ENCODE measurements at regions of chr9 and their contacts with region 1.

Region 1: GRCh38 chr9:81848472-81848871 is 79.8 kb upstream of the SPATA31D4 start:
- DNase-seq: peak; percentile 96
- H3K4me3 ChIP-seq: no peak overlapping the region
- H3K27ac ChIP-seq: peak overlapping the region; percentile 69
- H3K4me1 ChIP-seq: peaks cover 46% of the 10 kb centered on the region
- H3K27me3 ChIP-seq: no peaks in the 10 kb centered on the region
- CTCF ChIP-seq: peak; percentile 14 to 29
- POLR2A ChIP-seq: no peak

Region 2: GRCh38 chr9:81028504-81028903 is 820.0 kb before region 1 on chr9:
- CTCF ChIA-PET with region 1: no interaction called
- POLR2A ChIA-PET with region 1: no interaction called
- dilution Hi-C with region 1: no loop called
- intact Hi-C with region 1: loop called (anchors 5 kb)
- DNase-seq: peak; percentile 61
- H3K4me3 ChIP-seq: no peak overlapping the region
- H3K27ac ChIP-seq: peak overlapping the region; percentile 42
- H3K4me1 ChIP-seq: peaks cover 6% of the 10 kb centered on the region
- H3K27me3 ChIP-seq: no peaks in the 10 kb centered on the region
- CTCF ChIP-seq: no peak
- POLR2A ChIP-seq: no peak

Region 3: DNA sequence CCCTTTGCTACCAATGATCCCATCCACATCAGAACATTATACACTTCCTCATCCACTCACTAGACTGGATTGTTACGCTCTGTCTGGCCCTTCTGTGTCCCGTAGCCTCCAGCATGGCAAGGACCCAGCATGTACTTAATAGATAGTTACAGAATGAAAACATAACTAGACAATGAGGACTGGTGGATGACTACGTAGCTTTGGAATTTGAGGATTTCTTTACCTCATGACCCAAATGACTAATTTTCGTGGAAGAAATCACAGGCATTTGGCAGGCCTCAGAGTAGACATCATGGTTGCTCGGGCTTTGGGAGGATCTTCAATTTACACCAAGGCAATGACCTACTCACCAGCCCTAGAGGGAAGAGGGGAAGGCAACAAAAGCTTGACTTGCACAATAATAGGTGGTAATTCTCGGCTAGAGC is 458.9 kb before region 1 on chr9:
- CTCF ChIA-PET with region 1: interaction called, 4 read pairs
- POLR2A ChIA-PET with region 1: no interaction called
- dilution Hi-C with region 1: no loop called
- intact Hi-C with region 1: loop called (anchors 1 kb)
- DNase-seq: peak; percentile 98
- H3K4me3 ChIP-seq: no peak overlapping the region
- H3K27ac ChIP-seq: peak overlapping the region; percentile 100
- H3K4me1 ChIP-seq: peaks cover 31% of the 10 kb centered on the region
- H3K27me3 ChIP-seq: no peaks in the 10 kb centered on the region
- CTCF ChIP-seq: no peak
- POLR2A ChIP-seq: peak; percentile 60

Region 4: DNA sequence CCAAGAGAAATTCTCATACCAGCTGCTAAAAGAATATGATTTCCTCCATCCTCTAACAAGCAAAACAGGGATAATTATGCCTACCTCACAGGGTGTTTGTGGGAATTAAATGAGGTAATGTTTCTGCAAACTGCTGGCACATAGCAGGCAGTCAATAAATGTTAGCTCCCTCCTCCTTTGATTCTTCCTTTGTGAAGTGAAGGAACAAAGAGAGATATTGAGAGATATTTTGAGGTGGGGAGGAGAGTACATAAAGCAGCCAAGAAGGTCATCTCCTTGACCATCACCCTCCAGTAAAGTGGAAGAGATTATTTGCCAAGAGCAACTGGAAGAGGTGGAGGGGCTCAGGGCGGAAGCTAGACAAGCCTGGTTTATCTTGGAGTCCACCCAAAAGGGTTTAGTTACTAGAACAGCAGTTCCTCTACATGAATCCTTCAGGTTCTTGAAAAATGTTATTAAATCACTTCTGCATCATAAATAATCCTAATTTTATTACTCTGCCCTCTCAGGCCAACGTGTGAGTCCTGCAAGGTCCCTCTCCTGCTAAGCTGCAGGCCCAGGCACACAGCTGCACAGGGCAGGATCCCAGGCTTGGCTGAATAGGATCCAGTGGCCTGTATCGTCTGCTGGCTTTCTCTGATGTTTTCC is 124.1 kb before region 1 on chr9:
- CTCF ChIA-PET with region 1: interaction called, 10 read pairs
- POLR2A ChIA-PET with region 1: no interaction called
- dilution Hi-C with region 1: no loop called
- intact Hi-C with region 1: no loop called
- DNase-seq: peak; percentile 89
- H3K4me3 ChIP-seq: no peak overlapping the region
- H3K27ac ChIP-seq: peak overlapping the region; percentile 21
- H3K4me1 ChIP-seq: peaks cover 8% of the 10 kb centered on the region
- H3K27me3 ChIP-seq: no peaks in the 10 kb centered on the region
- CTCF ChIP-seq: no peak
- POLR2A ChIP-seq: no peak

Region 5: DNA sequence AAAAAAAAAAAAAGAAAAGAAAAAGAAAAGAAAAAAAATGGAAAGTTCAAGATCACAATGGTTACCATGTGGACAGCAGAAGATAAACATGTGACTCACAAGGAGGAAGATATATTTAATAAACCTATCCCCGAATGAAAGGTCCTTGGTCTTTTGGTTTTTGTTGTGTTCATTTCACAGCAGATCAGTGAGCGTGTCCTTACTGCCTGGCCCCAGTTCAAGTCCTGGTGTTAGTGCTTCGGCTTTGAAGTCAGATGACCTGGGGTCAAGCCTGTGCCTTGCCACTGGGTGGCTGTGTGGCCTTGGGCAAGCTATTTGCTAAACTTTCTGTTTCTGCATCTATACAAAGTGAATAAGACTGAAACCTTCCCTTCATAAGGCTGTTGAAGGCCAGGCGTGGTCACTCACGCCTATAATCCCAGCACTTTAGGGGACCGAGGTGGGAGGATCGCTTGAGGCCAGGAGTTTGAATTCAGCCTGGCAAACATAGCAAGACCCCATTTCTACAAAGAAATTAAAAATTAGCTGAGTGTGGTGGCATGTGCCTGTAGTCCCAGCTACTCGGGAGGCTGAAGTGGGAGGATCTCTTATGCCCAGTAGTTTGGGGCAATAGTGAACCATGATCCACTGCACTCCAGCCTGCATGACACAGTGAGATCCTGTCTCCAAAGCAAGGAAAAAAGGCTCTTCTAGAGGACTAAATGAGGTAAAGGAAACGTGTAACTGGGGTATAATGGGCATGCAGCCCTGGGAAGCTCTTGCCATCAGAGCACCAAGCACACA is 14.7 kb before region 1 on chr9:
- CTCF ChIA-PET with region 1: interaction called, 11 read pairs
- POLR2A ChIA-PET with region 1: no interaction called
- dilution Hi-C with region 1: no loop called
- intact Hi-C with region 1: no loop called
- DNase-seq: peak; percentile 62
- H3K4me3 ChIP-seq: no peak overlapping the region
- H3K27ac ChIP-seq: peak overlapping the region; percentile 24
- H3K4me1 ChIP-seq: peaks cover 2% of the 10 kb centered on the region
- H3K27me3 ChIP-seq: peaks cover 2 to 5% of the 10 kb centered on the region in 2 experiments
- CTCF ChIP-seq: no peak
- POLR2A ChIP-seq: no peak

Region 6: DNA sequence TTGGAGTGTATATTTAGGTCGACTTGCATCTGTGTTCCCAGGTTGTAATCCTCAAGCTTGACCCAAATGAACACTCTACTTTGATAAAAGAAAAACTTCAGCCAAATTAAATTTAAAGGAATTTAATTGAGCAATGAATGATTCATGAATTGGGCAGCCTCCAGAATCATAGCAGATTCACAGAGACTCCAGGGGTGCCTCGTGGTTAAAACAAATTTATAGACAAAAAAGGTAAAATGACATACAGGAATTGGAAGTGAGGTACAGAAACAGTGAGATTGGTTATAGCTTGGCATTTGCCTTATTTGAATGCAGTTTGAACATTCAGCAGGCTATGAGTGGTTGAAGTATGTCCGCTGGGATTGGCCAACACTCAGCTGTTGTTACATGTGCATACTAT is 58.2 kb after region 1 on chr9:
- CTCF ChIA-PET with region 1: no interaction called
- POLR2A ChIA-PET with region 1: no interaction called
- dilution Hi-C with region 1: no loop called
- intact Hi-C with region 1: no loop called
- DNase-seq: no peak
- H3K4me3 ChIP-seq: no peak overlapping the region
- H3K27ac ChIP-seq: no peak overlapping the region
- H3K4me1 ChIP-seq: no peaks in the 10 kb centered on the region
- H3K27me3 ChIP-seq: no peaks in the 10 kb centered on the region
- CTCF ChIP-seq: no peak
- POLR2A ChIP-seq: no peak

Region 7: DNA sequence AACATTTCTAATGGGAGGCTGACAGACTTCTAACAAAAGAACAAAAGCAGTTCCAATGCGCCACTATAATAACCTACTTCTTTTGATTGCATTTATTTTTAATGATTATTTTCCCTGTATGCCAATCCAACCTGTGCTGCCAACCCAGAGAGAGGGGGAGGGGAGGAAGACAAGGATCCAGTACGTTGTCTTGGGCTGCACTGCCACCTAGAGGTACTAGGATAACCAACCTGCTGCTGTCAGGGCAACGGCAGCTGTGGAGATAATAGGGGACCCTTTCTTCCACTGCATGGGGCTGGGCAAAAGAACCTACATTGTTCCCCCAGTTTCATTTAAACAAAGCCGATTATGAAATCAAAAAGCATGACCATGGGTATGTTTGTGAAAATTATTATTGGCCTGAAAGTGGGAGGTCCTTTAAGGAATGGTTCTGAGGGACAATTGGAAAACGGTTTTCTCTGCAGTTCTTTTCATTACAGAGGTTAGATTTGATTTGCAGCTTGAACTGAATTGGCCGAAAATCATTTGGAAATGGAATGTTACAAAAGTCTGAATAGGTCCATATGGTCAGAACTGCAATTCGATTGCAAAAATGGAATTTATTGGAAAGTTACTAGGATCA is 1113.1 kb after region 1 on chr9:
- CTCF ChIA-PET with region 1: no interaction called
- POLR2A ChIA-PET with region 1: no interaction called
- dilution Hi-C with region 1: no loop called
- intact Hi-C with region 1: loop called (anchors 10 kb)
- DNase-seq: peak; percentile 74
- H3K4me3 ChIP-seq: no peak overlapping the region
- H3K27ac ChIP-seq: no peak overlapping the region
- H3K4me1 ChIP-seq: no peaks in the 10 kb centered on the region
- H3K27me3 ChIP-seq: peaks cover 0 to 4% of the 10 kb centered on the region in 2 experiments
- CTCF ChIP-seq: peak; percentile 75 to 81
- POLR2A ChIP-seq: no peak